Left cardiac atrium (tissue), 4 donors: ENCODE measurements at regions of chr16 and their contacts with region 1.

Region 1: DNA sequence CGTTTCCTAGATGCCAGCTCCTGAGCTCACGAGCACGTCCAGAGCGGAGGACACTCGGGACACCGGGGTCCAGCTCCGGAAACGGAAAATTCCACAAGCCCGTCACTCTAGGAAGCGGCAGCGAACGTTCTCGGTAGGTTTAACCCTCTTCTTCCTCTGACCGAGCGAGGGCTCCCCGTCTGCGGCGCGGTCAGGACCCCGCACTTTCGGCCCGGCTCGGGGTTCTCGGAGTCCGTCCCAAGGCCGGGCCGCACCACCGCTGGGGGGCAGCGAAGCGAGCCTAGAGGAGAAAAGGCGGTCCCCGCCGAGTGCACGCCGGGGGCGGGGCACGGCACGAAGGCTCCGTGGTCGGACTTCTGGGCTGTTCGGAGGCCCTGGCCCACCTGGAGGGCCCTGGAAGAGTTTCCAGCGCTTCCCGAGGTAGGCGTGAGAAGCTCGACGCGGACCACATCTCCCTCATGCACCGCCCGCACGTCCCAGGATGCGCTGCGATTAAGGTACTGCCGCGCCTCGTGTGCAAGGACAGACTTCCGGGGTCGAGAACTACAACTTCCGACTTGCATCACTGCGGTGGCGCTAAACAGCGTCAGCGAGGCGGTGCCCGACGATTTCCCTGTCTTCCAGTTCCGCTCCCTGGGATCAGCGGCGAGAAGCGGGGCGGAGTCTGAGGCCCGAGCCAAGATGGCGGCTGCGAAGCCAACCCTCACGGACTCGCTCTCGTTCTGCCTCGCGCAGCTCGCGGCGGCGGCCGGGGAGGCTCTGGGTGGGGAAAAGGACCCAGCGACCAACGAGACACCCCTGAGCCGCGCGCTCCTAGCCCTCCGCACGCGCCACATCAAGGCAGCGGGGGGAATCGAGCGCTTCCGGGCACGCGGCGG is at the start of gene ARMC5:
- DNase-seq: peak; percentile 98
- ATAC-seq: peak; percentile 91
- total RNA-seq, gene ARMC5: 7.0 to 8.9 TPM

Region 2: DNA sequence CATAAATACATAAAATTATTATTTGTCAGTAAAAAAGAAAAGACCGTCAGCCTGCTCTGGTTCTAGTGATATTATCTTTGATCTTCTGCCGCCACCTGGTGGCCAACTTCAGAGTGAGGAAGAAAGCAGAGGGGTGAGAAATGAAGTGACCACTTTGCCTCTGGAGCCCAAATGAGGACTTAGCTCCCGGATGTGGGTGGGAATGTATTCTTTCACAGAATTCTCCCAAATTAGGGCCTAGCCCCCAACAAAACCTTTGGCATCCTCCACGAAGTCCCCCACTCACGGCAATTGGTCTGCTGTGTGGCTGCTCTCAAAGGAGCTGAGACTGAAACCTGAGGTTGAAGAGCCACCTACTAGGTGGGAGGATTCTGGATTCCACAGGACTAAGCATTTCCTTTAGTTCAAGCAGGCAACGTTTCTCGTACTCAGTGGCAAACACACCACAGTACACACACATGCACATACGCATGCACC is 409.6 kb after region 1 on chr16:
- intact Hi-C with region 1: loop called in 1 of 2 experiments (anchors 10 kb)
- DNase-seq: peak; percentile 84
- ATAC-seq: peak; percentile 63 to 71